ENCODE measurements at regions of chr11 and their contacts with region 1.

Region 1: GRCh38 chr11:121655537-121656327 is 203.0 kb upstream of the SORL1-AS1 start:
- DNase-seq: peak; percentile 95
- H3K4me3 ChIP-seq: peak overlapping the region; percentile 55
- CTCF ChIP-seq: peak; percentile 98

Region 2: DNA sequence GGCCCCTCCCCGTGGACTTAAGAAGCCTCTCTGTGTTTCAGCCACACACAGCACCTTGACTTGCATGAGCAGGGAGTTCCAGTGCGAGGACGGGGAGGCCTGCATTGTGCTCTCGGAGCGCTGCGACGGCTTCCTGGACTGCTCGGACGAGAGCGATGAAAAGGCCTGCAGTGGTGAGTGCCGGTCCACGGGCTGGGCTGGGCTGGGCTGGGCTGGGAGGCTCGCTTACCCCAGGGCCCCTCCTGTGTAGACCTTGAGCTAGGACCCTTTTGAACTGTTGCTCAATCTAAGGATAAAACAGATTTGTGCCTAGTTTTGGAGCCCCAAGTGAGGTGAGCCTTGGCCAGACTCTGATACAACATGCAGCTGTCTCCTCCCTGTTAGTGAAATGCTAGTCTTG is 51.6 kb before region 1 on chr11:
- CTCF ChIA-PET with region 1: no interaction called
- POLR2A ChIA-PET with region 1: no interaction called
- DNase-seq: no peak
- H3K4me3 ChIP-seq: no peak overlapping the region
- CTCF ChIP-seq: no peak

Region 3: DNA sequence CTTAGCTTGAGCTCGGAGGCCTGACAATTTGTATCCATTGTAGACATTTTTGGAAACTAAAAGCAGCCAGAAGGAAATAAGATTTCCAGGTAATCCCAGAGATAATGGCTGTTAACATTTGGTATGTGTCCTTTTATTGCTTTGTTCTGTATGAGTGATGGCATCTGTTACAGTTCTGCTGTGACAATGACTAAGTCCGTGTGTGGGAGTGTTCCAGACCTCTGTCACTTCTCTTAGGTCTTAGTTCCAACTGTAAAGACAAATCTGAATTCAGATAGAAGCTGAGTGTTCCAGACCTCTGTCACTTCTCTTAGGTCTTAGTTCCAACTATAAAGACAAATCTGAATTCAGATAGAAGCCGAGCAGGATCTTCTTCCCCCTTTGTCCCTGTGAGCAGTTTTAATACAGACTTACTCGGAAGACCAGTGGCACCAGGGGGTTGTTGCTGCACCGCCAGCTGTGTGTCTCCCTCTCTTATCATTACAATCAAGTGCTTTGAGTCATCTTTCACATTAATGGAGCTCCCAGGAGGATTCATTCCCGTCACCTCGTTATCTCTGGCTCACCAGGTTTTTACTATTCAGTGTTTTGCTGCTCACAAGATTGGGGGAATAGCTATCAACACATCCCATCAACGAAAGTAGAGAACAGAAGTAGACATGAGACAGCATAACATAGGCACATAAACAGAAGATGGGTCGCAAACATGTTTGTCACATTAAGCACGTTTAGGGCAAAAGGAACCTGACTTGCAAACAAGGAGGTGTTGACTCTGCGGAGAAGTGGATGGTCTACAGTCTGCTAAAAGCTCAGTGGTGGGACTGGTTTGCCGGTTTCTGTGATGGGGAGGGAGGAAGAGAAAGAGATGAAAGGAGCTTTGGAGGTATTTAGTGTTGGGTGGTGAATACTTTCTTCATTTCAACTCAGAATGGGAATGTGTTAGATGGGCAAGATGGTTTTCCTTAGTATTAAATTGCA is 11.9 kb before region 1 on chr11:
- CTCF ChIA-PET with region 1: interaction called, 51 read pairs
- POLR2A ChIA-PET with region 1: interaction called, 3 read pairs
- DNase-seq: no peak
- H3K4me3 ChIP-seq: no peak overlapping the region
- CTCF ChIP-seq: no peak

Region 4: GRCh38 chr11:121722431-121723245 is 66.9 kb after region 1 on chr11:
- CTCF ChIA-PET with region 1: no interaction called
- POLR2A ChIA-PET with region 1: no interaction called
- DNase-seq: no peak
- H3K4me3 ChIP-seq: peak overlapping the region; percentile 55
- CTCF ChIP-seq: no peak

Region 5: GRCh38 chr11:122020902-122021301 is 365.2 kb after region 1 on chr11:
- CTCF ChIA-PET with region 1: interaction called, 14 read pairs
- POLR2A ChIA-PET with region 1: no interaction called
- DNase-seq: no peak
- H3K4me3 ChIP-seq: no peak overlapping the region
- CTCF ChIP-seq: peak; percentile 28

Region 6: GRCh38 chr11:122069707-122070360 is 414.1 kb after region 1 on chr11:
- CTCF ChIA-PET with region 1: interaction called, 17 read pairs
- POLR2A ChIA-PET with region 1: interaction called, 4 read pairs
- DNase-seq: no peak
- H3K4me3 ChIP-seq: no peak overlapping the region
- CTCF ChIP-seq: no peak

Region 7: GRCh38 chr11:122101625-122102291 is 446.0 kb after region 1 on chr11:
- CTCF ChIA-PET with region 1: interaction called, 56 read pairs
- POLR2A ChIA-PET with region 1: interaction called, 4 read pairs
- DNase-seq: no peak
- H3K4me3 ChIP-seq: peak overlapping the region; percentile 82
- CTCF ChIP-seq: peak; percentile 72

Region 8: DNA sequence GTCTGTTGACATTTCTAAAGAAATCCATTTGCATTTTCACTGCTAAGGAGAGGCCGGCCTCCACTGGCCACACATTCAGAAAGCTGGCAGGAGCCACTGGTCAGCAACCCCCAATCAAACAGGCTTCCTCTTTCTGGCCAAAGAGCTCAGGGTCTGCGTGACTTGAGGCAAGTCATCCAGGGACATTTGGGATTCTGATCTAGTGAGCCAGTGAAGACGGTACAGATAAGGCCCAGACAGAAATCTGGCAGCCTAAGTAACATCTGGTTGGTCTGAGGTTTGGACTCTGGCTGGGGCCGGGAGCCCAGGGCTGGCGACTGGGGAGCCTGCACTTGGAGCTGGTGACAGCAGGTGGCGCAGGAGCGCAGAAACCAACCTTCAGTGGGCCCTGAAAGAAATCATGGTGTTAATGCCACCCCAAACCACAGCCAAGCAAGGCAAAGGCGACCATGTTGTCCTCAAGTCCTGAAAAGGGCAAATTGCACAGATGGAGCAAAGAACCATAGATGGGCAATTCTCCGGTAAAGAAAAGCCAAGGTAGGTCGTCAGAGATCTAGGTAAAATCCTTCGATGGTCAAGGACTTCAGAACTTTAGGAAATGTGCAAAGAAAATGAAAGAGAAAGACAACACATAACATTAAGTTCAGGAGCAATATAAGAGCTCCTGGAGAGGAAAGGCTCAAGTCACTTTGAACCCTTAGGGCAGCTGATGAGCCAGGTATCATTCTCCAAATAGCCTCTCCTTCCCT is 559.7 kb after region 1 on chr11:
- CTCF ChIA-PET with region 1: interaction called, 35 read pairs
- POLR2A ChIA-PET with region 1: interaction called, 5 read pairs
- DNase-seq: peak; percentile 96
- H3K4me3 ChIP-seq: no peak overlapping the region
- CTCF ChIP-seq: peak; percentile 92